Adrenal gland (tissue), 19 donors: ENCODE measurements at regions of chr19 and their contacts with region 1.

Region 1: DNA sequence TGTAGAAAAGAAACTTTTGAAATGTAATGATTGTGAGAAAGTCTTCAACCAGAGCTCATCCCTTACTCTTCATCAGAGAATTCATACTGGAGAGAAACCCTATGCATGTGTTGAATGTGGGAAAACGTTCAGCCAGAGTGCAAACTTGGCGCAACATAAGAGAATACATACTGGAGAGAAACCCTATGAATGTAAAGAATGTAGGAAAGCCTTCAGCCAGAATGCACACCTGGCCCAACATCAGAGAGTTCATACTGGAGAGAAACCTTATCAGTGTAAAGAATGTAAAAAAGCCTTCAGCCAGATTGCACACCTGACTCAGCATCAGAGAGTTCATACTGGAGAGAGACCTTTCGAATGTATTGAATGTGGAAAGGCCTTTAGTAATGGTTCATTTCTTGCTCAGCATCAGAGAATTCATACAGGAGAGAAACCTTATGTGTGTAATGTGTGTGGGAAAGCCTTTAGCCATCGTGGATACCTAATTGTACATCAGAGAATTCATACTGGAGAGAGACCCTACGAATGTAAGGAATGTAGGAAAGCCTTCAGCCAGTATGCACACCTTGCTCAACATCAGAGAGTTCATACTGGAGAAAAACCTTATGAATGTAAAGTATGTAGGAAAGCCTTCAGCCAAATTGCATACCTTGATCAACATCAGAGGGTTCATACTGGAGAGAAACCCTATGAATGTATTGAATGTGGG is 19.3 kb downstream of the ZNF583 start:
- DNase-seq: no peak
- H3K4me3 ChIP-seq: peak overlapping the region in 1 of 4 donors; percentile 23
- H3K27ac ChIP-seq: no peak overlapping the region
- H3K4me1 ChIP-seq: no peaks in the 10 kb centered on the region
- H3K27me3 ChIP-seq: no peaks in the 10 kb centered on the region
- CTCF ChIP-seq: no peak
- POLR2A ChIP-seq: no peak

Region 2: DNA sequence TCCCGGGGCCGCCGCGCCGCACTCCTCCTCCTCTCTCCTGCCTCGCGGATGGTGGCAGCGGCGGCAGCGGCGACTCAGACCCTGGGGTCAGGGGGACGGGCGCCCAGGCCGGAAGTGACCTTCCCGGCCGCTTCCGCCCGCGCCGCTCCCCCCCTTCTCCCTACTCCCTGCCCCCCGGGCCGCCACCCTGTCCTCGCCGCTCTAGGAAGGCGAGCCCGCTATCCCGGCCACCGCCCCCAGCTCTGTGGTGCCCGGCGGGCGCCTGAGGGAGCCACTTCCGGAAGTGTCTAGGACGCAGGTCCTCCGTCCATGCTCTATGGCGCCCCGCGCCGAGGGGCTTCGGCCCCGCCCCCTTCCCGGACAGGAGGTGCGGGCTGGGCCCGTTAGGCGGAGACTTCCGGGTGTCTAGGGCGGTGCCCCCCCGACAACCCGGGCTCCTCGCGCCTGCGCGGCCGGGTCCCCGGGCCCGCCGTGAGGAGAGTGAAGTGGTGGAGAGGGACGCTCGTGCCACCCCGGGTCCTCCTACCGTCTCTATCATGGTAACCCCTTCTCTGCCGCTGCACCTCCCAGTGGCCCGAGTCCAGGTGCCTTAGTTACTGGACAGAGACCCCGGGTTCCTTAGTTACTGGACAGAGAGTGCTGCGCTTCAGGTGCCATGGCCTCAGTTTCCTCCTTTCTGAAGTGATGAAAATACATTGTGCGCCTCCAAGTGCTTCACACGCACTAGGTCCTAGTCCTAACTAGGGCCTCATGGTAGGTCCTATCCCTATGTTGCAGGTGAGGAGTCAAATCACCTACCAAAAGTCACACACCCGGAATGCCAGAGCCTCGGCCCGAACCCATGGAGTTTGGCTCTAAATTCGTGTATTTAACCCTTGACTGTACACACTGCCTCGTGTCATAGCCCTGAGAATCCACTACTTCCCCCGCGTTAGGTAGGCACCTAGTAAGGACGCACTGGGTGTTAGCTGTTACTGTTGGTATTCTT is 302.0 kb before region 1 on chr19 and contains the start of gene ZNF787:
- intact Hi-C with region 1: no loop called
- DNase-seq: peak; percentile 97 to 99 (median 98)
- H3K4me3 ChIP-seq: peak within 1 kb of the TSS in 3 of 4 donors; percentile 25 to 94 (median 50)
- H3K27ac ChIP-seq: peak within 1 kb of the TSS; percentile 89 to 100 (median 97)
- H3K4me1 ChIP-seq: peaks cover 19 to 33% of the 10 kb centered on the region in 2 donors
- H3K27me3 ChIP-seq: no peaks in the 10 kb centered on the region
- CTCF ChIP-seq: no peak
- POLR2A ChIP-seq: peak in 1 of 2 donors; percentile 81
- total RNA-seq, gene ZNF787: 8.5 to 51.5 (median 26.7) TPM

Region 3: GRCh38 chr19:56314562-56315077 is 108.8 kb before region 1 on chr19 and contains the start of gene ZSCAN5A:
- intact Hi-C with region 1: no loop called
- DNase-seq: peak; percentile 97 to 99 (median 98)
- H3K4me3 ChIP-seq: peak within 1 kb of the TSS; percentile 37 to 79 (median 64)
- H3K27ac ChIP-seq: peak within 1 kb of the TSS; percentile 87 to 96 (median 93)
- H3K4me1 ChIP-seq: peaks cover 5 to 26% of the 10 kb centered on the region in 2 donors
- H3K27me3 ChIP-seq: no peaks in the 10 kb centered on the region
- CTCF ChIP-seq: no peak
- POLR2A ChIP-seq: peak; percentile 22 to 55
- total RNA-seq, gene ZSCAN5A: 4.8 to 20.1 (median 8.1) TPM

Region 4: GRCh38 chr19:56377104-56377924 is 46.1 kb before region 1 on chr19:
- intact Hi-C with region 1: no loop called
- DNase-seq: no peak
- H3K4me3 ChIP-seq: no peak overlapping the region
- H3K27ac ChIP-seq: no peak overlapping the region
- H3K4me1 ChIP-seq: no peaks in the 10 kb centered on the region
- H3K27me3 ChIP-seq: no peaks in the 10 kb centered on the region
- CTCF ChIP-seq: no peak
- POLR2A ChIP-seq: no peak

Region 5: GRCh38 chr19:56538254-56538760 is 114.9 kb after region 1 on chr19:
- intact Hi-C with region 1: loop called in 1 of 2 experiments (anchors 10 kb)
- DNase-seq: peak; percentile 87 to 94 (median 93)
- H3K4me3 ChIP-seq: peak overlapping the region; percentile 56 to 98 (median 68)
- H3K27ac ChIP-seq: peak overlapping the region; percentile 39 to 93 (median 72)
- H3K4me1 ChIP-seq: peaks cover 4 to 10% of the 10 kb centered on the region in 2 donors
- H3K27me3 ChIP-seq: no peaks in the 10 kb centered on the region
- CTCF ChIP-seq: peak in 3 of 6 experiments; percentile 18 to 28 (median 25)
- POLR2A ChIP-seq: peak in 1 of 2 donors; percentile 9